Endothelial cell of umbilical vein (primary cell): ENCODE measurements at regions of chr15 and their contacts with region 1.

Region 1: DNA sequence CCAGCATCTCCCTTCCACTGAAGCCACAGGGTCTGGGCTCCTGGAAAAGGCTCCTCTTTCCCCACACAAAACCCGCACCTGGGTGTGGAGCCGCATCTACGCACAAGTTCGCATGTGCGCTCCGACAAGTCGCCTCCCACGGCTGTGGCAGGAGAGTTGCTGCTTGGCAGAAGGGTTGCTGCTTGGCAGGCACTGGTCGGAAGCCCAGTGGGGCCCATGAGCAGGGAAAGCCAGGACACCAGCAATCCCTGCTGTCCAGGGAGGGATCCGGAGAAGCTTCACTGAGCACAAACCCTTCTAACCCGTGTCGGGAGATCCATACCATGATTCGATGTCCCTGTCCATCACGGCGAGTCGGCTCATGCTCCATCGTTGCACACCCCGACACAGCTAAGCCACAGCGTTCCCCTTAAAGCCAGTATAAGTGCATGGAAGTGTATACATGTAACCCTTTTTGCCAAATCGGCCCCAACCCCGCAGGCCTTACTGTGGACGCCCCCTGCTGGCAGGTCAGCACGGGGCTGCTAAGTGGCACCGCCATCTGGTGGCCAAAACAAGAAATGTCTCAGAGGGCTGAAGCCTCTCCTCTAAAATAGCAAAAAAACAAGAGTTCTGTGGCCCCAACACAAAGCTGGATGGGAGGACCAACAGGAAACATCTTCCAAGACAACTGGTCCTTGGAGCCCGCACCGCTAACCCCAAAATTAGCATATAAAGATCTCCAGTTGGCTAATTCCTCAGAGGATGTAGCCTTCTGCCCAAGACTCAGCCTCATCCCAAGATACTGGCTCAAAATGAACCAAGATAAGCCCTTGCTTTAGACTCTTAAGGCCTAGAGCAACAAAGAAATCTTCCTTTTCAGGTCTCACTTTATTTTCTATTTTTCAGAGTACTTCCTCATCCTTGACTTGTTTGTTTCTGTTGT is 8.3 kb downstream of the ANKRD63 start:
- DNase-seq: peak; percentile 82
- H3K4me3 ChIP-seq: no peak overlapping the region
- H3K27ac ChIP-seq: no peak overlapping the region
- H3K4me1 ChIP-seq: no peaks in the 10 kb centered on the region
- H3K27me3 ChIP-seq: peaks cover 17 to 25% of the 10 kb centered on the region in 2 experiments
- CTCF ChIP-seq: peak; percentile 100
- POLR2A ChIP-seq: no peak

Region 2: DNA sequence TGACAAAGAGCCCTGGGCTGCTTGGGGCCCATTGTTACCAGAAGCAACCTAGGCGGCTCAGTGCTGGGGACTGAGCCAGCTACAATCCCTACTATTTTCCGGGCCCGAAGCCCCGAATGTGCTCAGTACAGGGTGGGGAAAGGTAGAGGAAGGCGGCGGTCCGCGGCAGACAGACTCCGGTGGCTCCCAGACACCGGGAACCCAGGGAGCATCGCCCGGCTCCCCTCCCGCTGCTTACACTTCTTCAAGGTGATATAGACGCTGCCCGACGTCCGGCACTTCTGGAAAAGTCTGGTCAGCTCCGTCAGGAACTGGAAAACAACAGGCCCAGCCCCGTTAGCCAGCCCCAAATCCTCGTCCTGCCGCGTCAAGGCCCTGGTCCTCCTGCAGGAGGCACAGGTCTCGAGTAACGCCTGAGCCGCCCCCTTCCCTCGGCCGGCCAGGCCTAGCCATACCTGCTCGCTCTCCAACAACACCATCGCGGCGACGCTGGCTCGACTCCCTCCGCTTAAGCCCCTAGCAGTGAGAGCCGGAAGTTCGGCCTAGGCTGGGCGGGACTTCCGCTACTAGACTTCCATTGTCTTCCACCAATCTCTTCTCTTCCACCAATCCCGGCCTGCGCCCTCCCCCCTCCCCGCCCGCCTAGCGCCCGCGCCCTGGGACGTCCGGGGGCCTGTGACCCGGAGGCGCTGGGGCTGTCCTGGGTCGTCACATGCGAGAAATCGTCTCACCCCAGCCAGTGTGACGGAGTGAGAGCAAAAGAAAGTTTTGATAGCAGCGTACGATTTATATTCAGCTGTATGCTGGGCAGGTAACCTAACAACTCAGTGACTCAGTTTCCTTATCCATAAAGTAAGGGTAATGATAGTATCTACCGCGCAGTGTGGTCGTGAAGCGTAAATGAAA is 235.7 kb before region 1 on chr15 and contains the start of gene SRP14:
- CTCF ChIA-PET with region 1: interaction called, 169 read pairs
- POLR2A ChIA-PET with region 1: no interaction called
- dilution Hi-C with region 1: no loop called
- intact Hi-C with region 1: no loop called
- DNase-seq: peak; percentile 95
- H3K4me3 ChIP-seq: peak within 1 kb of the TSS; percentile 60 to 86 (median 71)
- H3K27ac ChIP-seq: peak within 1 kb of the TSS; percentile 78
- H3K4me1 ChIP-seq: peaks cover 17% of the 10 kb centered on the region
- H3K27me3 ChIP-seq: no peaks in the 10 kb centered on the region
- CTCF ChIP-seq: no peak
- POLR2A ChIP-seq: peak; percentile 96
- total RNA-seq, gene SRP14: 220 and 260 TPM in 2 replicates

Region 3: DNA sequence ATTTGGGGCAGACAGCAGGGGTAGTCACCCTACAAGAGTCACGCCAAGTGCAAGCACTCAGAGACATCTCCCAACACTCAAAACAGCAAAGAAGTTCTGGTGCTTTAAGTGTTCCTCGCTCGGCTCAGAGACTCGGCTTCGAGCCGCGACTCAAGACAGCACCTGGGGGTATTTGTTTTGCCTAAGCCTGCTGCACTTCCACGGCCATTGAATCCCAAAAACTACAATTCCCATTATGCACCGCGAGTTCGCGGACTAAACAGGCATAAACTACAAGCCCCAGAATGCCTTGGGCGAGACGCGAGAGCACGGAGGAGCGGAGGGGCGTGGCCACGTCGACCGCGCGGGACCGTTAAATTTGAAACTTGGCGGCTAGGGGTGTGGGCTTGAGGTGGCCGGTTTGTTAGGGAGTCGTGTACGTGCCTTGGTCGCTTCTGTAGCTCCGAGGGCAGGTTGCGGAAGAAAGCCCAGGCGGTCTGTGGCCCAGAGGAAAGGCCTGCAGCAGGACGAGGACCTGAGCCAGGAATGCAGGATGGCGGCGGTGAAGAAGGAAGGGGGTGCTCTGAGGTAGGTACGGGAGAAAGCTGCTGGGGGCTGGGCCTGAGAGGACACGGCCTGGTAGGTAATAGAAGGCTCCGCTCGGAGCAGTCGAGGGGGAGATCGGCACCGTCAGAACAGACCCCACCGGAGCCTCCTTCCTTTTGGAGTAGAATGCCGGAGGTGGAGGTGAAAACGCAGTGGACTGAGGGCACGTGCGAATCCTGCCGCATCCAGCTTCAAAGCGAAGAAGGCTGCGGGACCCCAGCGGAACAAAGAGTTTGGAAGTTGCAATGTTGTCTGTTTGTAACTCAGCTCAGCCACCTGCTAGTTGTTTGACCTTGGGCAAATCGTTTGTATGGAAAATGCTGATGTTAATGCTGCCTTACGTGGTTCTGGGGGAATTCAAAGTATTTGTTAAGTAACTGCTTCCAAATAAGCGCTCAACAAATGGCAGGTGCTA is 113.6 kb before region 1 on chr15 and contains the start of gene BUB1B:
- CTCF ChIA-PET with region 1: interaction called, 11 read pairs
- POLR2A ChIA-PET with region 1: no interaction called
- dilution Hi-C with region 1: no loop called
- intact Hi-C with region 1: no loop called
- DNase-seq: peak; percentile 96
- H3K4me3 ChIP-seq: peak within 1 kb of the TSS; percentile 67 to 92 (median 71)
- H3K27ac ChIP-seq: peak within 1 kb of the TSS; percentile 24
- H3K4me1 ChIP-seq: peaks cover 15% of the 10 kb centered on the region
- H3K27me3 ChIP-seq: peaks cover 3 to 4% of the 10 kb centered on the region in 2 experiments
- CTCF ChIP-seq: no peak
- POLR2A ChIP-seq: peak; percentile 39
- total RNA-seq, gene BUB1B: 65.6 and 69.8 TPM in 2 replicates

Region 4: DNA sequence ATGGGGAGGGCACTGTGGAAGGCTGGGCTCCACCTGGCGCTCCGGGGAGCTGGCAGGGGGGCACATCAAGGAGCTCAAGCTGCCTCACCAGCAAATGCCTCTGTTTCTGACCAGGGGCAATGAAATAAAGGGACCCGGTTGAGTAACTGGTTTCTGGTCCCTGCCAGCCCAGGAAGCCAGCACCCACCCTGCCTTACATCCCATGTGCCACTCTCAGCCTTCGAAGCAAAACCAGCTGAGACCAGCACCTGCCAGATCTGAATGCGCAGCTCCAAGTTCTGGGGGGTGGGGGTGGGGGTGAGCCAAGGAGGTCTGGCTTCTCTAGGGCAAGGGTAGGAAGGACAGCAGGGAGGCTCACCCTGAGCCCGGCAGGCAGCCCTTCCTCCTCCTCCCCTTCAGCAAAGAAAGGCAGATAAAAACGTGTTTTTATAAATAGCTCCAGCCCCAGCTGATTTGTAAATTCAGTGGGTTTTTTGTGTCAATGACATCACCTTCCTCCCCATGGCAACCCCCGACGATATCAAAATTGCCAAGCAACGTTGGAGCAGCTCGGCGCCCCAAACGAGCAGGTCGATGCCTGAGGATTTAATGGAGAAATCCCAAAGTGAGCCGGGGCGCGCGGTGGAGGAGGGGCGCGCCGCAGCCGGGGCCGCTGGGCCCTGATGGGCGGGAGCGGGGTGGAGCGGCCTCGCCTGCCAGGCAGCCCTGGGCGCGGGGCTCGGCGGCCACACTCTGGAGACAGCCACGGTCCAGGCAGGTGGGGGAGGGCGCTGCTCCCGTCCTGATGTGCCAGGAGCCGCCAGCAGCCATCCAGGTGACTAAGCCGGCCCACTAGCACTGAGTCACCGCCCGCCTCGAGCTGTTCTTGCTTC is 35.8 kb before region 1 on chr15 and contains the start of gene PAK6:
- CTCF ChIA-PET with region 1: interaction called, 63 read pairs
- POLR2A ChIA-PET with region 1: no interaction called
- dilution Hi-C with region 1: no loop called
- intact Hi-C with region 1: loop called (anchors 1 kb)
- DNase-seq: peak; percentile 11
- H3K4me3 ChIP-seq: peak within 1 kb of the TSS in 2 of 3 experiments; percentile 13 to 37
- H3K27ac ChIP-seq: no peak within 1 kb of the TSS
- H3K4me1 ChIP-seq: peaks cover 4% of the 10 kb centered on the region
- H3K27me3 ChIP-seq: peaks cover 10 to 14% of the 10 kb centered on the region in 2 experiments
- CTCF ChIP-seq: no peak
- POLR2A ChIP-seq: no peak
- total RNA-seq, gene PAK6: not detected in 2 replicates

Region 5: GRCh38 chr15:40301467-40302179 is 27.0 kb after region 1 on chr15:
- CTCF ChIA-PET with region 1: interaction called, 403 read pairs
- POLR2A ChIA-PET with region 1: no interaction called
- dilution Hi-C with region 1: no loop called
- intact Hi-C with region 1: no loop called
- DNase-seq: no peak
- H3K4me3 ChIP-seq: no peak overlapping the region
- H3K27ac ChIP-seq: no peak overlapping the region
- H3K4me1 ChIP-seq: no peaks in the 10 kb centered on the region
- H3K27me3 ChIP-seq: peaks cover 5 to 11% of the 10 kb centered on the region in 2 experiments
- CTCF ChIP-seq: no peak
- POLR2A ChIP-seq: no peak

Region 6: DNA sequence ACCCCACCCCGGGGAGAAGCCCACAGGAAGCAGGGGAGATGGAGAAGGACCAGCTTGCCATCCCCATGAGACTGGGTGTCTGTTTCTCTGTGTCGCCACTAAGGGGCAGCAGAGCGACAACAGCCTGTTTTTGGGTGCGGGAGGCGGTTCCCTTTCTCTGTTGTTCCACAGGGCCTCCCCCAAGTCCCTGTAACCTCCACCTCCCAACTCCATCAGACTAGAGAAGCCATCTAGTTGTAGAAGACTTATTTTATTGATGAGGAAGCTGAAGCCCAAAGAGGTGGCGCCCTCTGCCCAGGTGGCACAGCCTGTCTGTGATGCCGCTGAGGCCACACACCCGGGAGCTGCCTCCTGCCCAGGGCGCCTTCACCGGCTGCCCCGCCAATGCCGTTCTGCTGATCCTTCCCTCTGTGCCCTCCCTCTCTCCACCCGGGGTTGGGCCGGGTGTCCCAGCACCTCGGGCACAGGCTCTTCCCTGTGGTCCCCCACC is 70.1 kb after region 1 on chr15:
- CTCF ChIA-PET with region 1: interaction called, 192 read pairs
- POLR2A ChIA-PET with region 1: no interaction called
- dilution Hi-C with region 1: no loop called
- intact Hi-C with region 1: no loop called
- DNase-seq: peak; percentile 36
- H3K4me3 ChIP-seq: no peak overlapping the region
- H3K27ac ChIP-seq: peak overlapping the region; percentile 96
- H3K4me1 ChIP-seq: peaks cover 41% of the 10 kb centered on the region
- H3K27me3 ChIP-seq: no peaks in the 10 kb centered on the region
- CTCF ChIP-seq: peak; percentile 74 to 88
- POLR2A ChIP-seq: no peak